ENCODE measurements at regions of chr7 and their contacts with region 1.

Region 1: GRCh38 chr7:88243345-88243909 is 23.6 kb upstream of the SRI start:
- DNase-seq: peak in 1 of 5 donors; percentile 13
- ATAC-seq: peak; percentile 71 to 87 (median 80)
- H3K4me3 ChIP-seq: no peak overlapping the region
- H3K27ac ChIP-seq: no peak overlapping the region
- H3K4me1 ChIP-seq: peaks cover 0 to 4% (median 0%) of the 10 kb centered on the region in 12 donors
- H3K27me3 ChIP-seq: no peaks in the 10 kb centered on the region
- CTCF ChIP-seq: peak; percentile 62 to 91 (median 78)
- POLR2A ChIP-seq: no peak

Region 2: DNA sequence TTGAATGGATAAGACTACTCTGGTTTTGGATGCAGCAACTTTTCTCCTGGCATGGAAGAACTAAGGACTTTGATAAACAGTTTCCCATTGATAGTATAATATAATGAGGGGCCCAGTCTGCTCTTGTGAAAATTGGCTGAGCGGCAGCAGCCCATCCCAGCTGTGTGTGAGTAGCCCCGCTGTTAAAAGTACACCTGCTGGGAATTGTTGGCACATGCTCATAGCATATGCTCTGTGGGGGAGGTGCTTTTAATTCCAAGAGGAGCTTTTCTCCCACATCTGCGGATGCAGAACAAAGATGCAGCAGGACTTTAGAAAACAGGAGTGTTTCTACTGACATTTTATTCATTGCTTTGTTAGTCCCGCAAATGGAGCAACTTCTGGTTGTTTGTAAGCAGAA is 42.6 kb before region 1 on chr7:
- intact Hi-C with region 1: no loop called
- DNase-seq: no peak
- ATAC-seq: no peak
- H3K4me3 ChIP-seq: no peak overlapping the region
- H3K27ac ChIP-seq: no peak overlapping the region
- H3K4me1 ChIP-seq: no peaks in the 10 kb centered on the region
- H3K27me3 ChIP-seq: no peaks in the 10 kb centered on the region
- CTCF ChIP-seq: no peak
- POLR2A ChIP-seq: no peak

Region 3: DNA sequence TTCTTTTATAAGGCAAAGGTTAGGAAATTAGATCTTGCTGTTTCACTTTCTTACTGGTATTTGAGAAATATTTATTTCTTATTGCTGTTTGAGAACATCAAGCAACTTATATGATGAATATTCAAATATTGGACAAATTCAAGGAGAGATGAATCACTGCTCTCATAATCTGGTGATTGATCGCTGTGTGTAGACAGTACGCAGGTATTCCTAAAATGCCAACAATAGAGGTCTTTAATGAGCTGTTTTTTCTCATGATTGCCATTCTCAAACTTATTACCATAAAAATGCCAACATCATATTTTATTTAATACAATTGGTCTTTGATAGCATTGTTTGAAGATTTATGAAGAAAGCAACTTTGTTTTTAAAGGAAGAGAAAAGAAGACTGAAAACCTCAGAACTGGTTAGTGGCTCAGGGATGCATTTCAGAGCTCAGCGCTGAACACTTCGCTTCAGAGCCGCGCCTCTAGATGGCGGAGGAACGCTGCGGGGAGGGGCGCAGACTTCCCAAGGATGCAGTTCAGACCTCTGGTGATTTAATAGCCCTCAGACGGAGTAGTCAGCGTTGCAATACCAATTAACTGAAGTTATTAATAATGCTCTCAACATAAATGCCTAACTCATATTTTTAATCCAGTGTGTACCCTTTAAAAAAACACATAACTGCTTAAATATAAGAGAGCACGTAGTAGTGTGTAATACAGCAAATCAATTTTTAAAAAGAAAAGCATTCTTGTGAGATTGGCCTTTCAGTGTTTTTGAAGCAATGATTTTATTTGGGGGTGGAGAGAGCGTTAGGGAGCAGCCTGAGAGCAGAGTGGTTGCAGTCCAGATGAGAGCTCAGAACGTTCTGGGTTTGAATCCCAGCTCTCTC is 101.8 kb after region 1 on chr7:
- intact Hi-C with region 1: loop called in 1 of 10 experiments (anchors 5 kb)
- DNase-seq: peak; percentile 33 to 77 (median 55)
- ATAC-seq: peak; percentile 42 to 92 (median 82)
- H3K4me3 ChIP-seq: no peak overlapping the region
- H3K27ac ChIP-seq: no peak overlapping the region
- H3K4me1 ChIP-seq: peaks cover 0 to 3% (median 0%) of the 10 kb centered on the region in 12 donors
- H3K27me3 ChIP-seq: no peaks in the 10 kb centered on the region
- CTCF ChIP-seq: peak; percentile 28 to 76 (median 50)
- POLR2A ChIP-seq: no peak

Region 4: GRCh38 chr7:88357781-88358525 is 114.5 kb after region 1 on chr7:
- intact Hi-C with region 1: loop called (anchors 1 to 5 kb)
- DNase-seq: no peak
- ATAC-seq: peak in 3 of 4 donors; percentile 81 to 91 (median 82)
- H3K4me3 ChIP-seq: peak overlapping the region in 8 of 12 donors; percentile 20 to 46 (median 31)
- H3K27ac ChIP-seq: no peak overlapping the region
- H3K4me1 ChIP-seq: peaks cover 0 to 25% (median 0%) of the 10 kb centered on the region in 12 donors
- H3K27me3 ChIP-seq: no peaks in the 10 kb centered on the region
- CTCF ChIP-seq: peak; percentile 41 to 80 (median 64)
- POLR2A ChIP-seq: no peak

Region 5: GRCh38 chr7:88835147-88835728 is 591.8 kb after region 1 on chr7:
- intact Hi-C with region 1: loop called in 1 of 10 experiments (anchors 10 kb)
- DNase-seq: no peak
- ATAC-seq: no peak
- H3K4me3 ChIP-seq: no peak overlapping the region
- H3K27ac ChIP-seq: no peak overlapping the region
- H3K4me1 ChIP-seq: no peaks in the 10 kb centered on the region
- H3K27me3 ChIP-seq: no peaks in the 10 kb centered on the region
- CTCF ChIP-seq: peak in 8 of 12 donors; percentile 12 to 39 (median 22)
- POLR2A ChIP-seq: no peak

Measured in heart left ventricle (tissue), 16 donors.